Activated CD4-positive, alpha-beta T cell treated with anti-CD3 and anti-CD28 coated beads, Interleukin-2, amount 10 ng/mL, durations not matched to agents 7 days and 5 days (primary cell): ENCODE measurements at regions of chr10 and their contacts with region 1.

Region 1: DNA sequence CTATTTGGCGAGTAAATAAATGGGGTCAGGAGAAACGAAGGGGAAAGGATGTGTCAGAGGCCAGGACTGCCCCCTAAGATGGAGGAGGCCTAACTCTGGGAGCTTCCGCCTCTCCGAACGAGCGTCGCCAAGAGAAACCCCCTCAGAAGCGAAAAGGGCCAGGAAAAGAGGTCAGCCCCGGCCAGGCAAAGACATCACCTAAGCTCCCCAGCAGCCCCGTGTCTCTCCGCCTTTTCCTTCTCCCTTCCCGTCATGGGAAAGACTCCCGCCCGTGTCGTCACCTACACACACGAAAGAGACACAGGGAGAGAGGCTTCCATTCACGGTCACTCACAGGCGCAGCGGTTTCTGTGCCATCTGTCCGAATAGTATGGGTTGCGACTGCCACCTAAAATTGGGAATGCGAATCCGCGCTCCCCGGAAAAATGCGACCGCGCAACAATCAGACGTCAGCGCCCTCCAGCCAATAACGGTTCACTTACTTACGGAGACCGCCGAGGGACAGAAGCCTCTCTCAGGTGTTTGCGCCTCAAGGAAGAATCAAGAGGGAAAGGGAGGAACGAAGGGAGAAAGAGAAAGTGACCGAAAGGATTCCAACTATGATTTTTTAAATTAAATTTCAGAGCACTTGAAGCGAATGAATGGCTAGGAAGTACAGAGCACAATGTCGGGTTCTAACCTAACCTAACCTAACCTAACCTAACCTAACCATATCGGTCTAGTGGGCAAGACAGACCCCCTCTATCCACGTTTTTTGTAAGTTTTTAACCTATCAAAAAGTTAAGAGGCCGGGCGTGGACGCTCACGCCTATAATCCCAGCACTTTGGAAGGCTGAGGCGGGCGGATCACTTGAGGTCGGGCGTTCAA is at the start of gene CWF19L1:
- DNase-seq: peak; percentile 80
- H3K4me3 Mint-ChIP-seq: peak within 1 kb of the TSS; percentile 100
- H3K27ac Mint-ChIP-seq: peak within 1 kb of the TSS; percentile 100
- H3K4me1 Mint-ChIP-seq: peaks cover 22% of the 10 kb centered on the region
- H3K27me3 Mint-ChIP-seq: no peaks in the 10 kb centered on the region
- total RNA-seq, gene CWF19L1: 37.3 to 38.4 TPM

Region 2: DNA sequence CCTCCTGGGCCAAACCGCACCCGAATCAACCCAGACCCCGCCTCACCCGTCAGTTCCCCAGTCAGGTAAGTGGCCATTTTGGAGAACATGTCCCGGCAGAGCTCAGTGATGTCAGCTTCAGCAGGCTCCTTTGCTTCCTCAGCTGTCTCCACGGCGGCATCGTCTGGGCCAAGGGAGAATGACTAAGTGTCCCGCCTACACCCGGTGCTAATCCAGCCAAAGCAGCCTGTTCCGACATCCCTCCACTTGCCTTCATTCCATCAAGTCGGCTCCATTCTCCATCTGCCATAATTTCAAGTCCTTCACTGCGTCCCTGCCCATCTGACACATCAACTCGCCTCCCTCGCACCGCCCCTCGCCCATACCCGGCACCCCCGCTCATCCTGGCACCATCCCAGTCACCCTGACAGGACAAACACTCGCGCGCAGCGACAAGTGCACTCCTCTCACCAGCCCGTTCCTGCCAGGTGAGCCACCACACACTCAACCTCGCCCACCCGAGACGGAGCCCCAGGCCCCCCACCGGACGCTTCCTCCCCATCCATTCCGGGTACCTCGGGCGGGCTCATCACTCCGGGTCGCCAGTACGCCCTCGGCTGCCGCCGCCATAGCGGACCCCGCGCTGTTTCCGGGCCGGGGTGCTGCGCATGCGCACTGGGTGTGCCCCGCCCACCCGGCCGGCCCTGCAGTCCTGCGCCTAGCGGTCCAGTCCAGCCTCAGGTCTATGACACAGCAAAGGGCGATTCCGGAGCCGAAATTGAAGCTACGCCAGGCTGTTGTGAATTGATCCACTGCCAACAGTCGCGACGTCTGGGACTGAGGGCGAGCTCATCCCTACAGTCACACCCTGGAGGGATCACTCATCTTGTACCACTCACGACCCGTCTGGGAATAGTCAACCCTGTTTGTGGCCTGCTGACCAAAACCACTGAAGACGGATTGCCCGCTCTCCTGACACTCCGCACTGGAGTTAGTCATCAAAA is 18.9 kb after region 1 on chr10 and contains the start of gene BLOC1S2:
- CTCF ChIA-PET with region 1: interaction called, 4 read pairs
- POLR2A ChIA-PET with region 1: interaction called, 12 read pairs
- DNase-seq: peak; percentile 83
- H3K4me3 Mint-ChIP-seq: peak within 1 kb of the TSS; percentile 99
- H3K27ac Mint-ChIP-seq: peak within 1 kb of the TSS; percentile 98
- H3K4me1 Mint-ChIP-seq: peaks cover 38% of the 10 kb centered on the region
- H3K27me3 Mint-ChIP-seq: peaks cover 4% of the 10 kb centered on the region
- total RNA-seq, gene BLOC1S2: 42.1 to 46.9 TPM

Region 3: DNA sequence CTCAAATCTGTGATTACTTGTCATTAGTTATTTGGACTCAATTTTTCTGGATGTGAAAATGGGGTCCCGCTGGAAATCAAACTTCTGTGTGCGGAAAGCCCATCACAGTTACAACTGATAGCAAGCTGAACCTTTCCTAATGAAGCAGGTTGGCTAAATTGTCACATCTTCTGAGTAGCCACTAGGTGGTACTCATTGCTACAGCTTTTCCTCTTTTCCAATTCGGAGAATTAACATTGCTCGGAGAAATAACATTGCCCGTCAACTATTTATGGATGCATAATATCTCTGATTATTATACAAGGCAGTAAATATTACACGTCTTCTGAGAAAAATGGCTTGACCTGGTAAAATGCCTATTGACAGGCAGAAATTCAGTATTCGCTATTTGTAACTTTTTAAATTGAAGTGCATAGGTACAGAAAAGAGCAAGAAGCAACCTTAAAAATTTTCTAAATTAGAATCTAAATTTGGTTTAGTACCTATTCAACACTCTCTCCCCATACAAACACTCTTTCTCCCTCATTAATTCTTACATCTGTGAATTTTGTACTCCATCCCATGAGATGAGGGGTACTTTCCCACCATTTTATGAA is 36.4 kb after region 1 on chr10:
- CTCF ChIA-PET with region 1: no interaction called
- POLR2A ChIA-PET with region 1: no interaction called
- DNase-seq: no peak
- H3K4me3 Mint-ChIP-seq: no peak overlapping the region
- H3K27ac Mint-ChIP-seq: no peak overlapping the region
- H3K4me1 Mint-ChIP-seq: no peaks in the 10 kb centered on the region
- H3K27me3 Mint-ChIP-seq: peaks cover 47% of the 10 kb centered on the region